Heart left ventricle (tissue), 16 donors: ENCODE measurements at regions of chr5 and their contacts with region 1.

Region 1: DNA sequence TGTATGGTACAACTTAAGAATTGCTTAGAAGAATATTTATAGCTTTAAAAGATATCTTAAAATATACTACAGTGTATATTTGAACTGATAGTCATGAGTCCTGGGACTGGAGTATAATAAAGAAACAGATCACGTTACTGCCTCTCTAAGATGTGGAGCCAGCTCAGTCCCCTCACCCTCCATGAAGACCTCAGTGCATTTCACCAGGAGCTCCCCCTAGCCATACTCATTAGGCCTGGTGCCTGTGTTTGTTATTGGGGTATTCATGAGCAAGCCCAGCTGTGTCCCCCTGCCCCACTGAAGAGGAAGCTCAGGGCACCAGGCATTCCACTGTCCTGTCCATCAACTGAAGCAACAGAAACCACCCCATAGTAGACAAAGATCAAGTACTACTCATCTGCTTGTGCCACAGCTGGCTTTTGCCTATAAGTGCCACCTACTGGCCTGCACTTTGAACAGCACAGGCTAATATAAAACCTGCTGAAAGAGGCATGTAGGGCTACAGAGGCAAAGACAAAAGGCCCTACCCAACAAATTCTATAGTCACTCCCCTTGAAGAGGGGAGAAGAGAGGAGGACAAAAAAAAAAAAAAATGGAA is 850.2 kb upstream of the NUDT12 start:
- DNase-seq: no peak
- ATAC-seq: no peak
- H3K4me3 ChIP-seq: no peak overlapping the region
- H3K27ac ChIP-seq: no peak overlapping the region
- H3K4me1 ChIP-seq: no peaks in the 10 kb centered on the region
- H3K27me3 ChIP-seq: no peaks in the 10 kb centered on the region
- CTCF ChIP-seq: peak in 6 of 12 donors; percentile 5 to 29 (median 16)
- POLR2A ChIP-seq: no peak

Region 2: DNA sequence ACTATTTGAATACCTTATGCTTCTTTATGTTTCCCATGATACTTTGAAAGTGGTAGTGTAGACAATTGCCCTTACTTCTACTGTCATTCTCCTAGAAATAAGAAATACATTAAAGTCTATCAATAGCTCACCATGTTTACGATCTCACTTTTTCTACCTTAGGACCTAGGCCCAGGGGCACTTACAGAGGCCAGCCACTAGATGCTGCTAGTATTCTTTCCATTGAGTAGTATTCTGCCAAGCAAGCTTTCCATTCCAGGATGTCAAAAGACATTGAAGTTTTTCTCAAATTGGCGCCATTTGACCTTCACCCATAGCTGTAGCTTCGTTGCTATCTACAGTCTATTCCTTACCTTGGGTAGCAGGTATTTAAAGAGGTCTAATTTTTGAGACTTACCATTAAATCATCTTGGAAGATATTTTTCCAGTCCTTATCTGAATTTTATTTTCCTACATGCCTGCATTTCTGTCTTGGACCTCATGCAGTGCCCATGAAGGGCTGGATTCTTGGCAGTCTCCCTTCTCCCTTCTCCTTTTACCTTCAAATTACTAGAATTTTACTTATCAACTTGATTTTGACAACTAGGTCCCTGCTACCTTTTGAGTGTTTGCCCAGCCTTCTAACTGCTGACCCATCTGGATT is 604.2 kb before region 1 on chr5:
- intact Hi-C with region 1: loop called in 1 of 10 experiments (anchors 5 kb)
- DNase-seq: no peak
- ATAC-seq: no peak
- H3K4me3 ChIP-seq: no peak overlapping the region
- H3K27ac ChIP-seq: no peak overlapping the region
- H3K4me1 ChIP-seq: no peaks in the 10 kb centered on the region
- H3K27me3 ChIP-seq: no peaks in the 10 kb centered on the region
- CTCF ChIP-seq: peak; percentile 28 to 68 (median 46)
- POLR2A ChIP-seq: no peak

Region 3: GRCh38 chr5:104370523-104370922 is 42.2 kb before region 1 on chr5:
- intact Hi-C with region 1: no loop called
- DNase-seq: no peak
- ATAC-seq: no peak
- H3K4me3 ChIP-seq: no peak overlapping the region
- H3K27ac ChIP-seq: no peak overlapping the region
- H3K4me1 ChIP-seq: no peaks in the 10 kb centered on the region
- H3K27me3 ChIP-seq: no peaks in the 10 kb centered on the region
- CTCF ChIP-seq: no peak
- POLR2A ChIP-seq: no peak

Region 4: GRCh38 chr5:104891596-104891995 is 478.8 kb after region 1 on chr5:
- intact Hi-C with region 1: no loop called
- DNase-seq: no peak
- ATAC-seq: no peak
- H3K4me3 ChIP-seq: no peak overlapping the region
- H3K27ac ChIP-seq: no peak overlapping the region
- H3K4me1 ChIP-seq: no peaks in the 10 kb centered on the region
- H3K27me3 ChIP-seq: no peaks in the 10 kb centered on the region
- CTCF ChIP-seq: no peak
- POLR2A ChIP-seq: no peak